CD4-positive, alpha-beta memory T cell (primary cell): ENCODE measurements at regions of chr12 and their contacts with region 1.

Region 1: DNA sequence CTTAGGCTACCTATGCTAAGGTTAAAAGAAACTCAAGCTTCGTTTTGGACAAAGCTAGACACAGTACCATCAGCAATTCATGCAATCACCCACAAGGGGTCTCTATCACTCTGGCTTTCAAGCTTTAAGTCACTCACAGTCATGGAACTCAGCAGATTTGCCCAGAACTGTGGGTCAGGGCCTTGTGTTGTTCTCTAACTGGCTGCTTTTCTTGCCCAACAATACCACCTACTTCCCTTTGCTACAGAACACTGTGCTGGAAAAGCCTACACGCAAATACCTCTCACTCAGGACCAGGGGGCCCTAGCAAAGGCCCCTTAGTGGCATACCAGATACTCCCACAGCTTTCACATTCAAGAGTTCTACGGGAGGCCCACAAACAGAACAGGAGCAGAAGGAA is 9.1 kb downstream of the NEMP1 start:
- DNase-seq: peak; percentile 73 to 77 (median 75)
- H3K4me3 ChIP-seq: no peak overlapping the region
- H3K4me3 Mint-ChIP-seq: peak overlapping the region in 3 of 8 donors; percentile 0 to 37 (median 28)
- H3K27ac ChIP-seq: peak overlapping the region; percentile 57
- H3K27ac Mint-ChIP-seq: peak overlapping the region; percentile 75 to 89 (median 85)
- H3K4me1 ChIP-seq: peaks cover 25% of the 10 kb centered on the region
- H3K4me1 Mint-ChIP-seq: peaks cover 11 to 34% (median 15%) of the 10 kb centered on the region in 4 donors
- H3K27me3 ChIP-seq: no peaks in the 10 kb centered on the region
- H3K27me3 Mint-ChIP-seq: no peaks in the 10 kb centered on the region

Region 2: GRCh38 chr12:57088459-57089248 is 19.1 kb after region 1 on chr12 and contains the start of gene NAB2:
- CTCF ChIA-PET with region 1: interaction called, 184 read pairs
- POLR2A ChIA-PET with region 1: interaction called, 108 read pairs
- intact Hi-C with region 1: loop called (anchors 1 kb)
- DNase-seq: peak; percentile 89 to 94 (median 92)
- H3K4me3 ChIP-seq: peak within 1 kb of the TSS; percentile 90 to 91
- H3K4me3 Mint-ChIP-seq: peak within 1 kb of the TSS; percentile 92 to 98 (median 95)
- H3K27ac ChIP-seq: peak within 1 kb of the TSS; percentile 97
- H3K27ac Mint-ChIP-seq: peak within 1 kb of the TSS; percentile 97 to 99 (median 98)
- H3K4me1 ChIP-seq: peaks cover 52% of the 10 kb centered on the region
- H3K4me1 Mint-ChIP-seq: peaks cover 40 to 78% (median 53%) of the 10 kb centered on the region in 4 donors
- H3K27me3 ChIP-seq: no peaks in the 10 kb centered on the region
- H3K27me3 Mint-ChIP-seq: no peaks in the 10 kb centered on the region
- total RNA-seq, gene NAB2: 17.5 to 19.5 TPM

Region 3: GRCh38 chr12:57118711-57119271 is 49.3 kb after region 1 on chr12:
- CTCF ChIA-PET with region 1: interaction called, 458 read pairs
- POLR2A ChIA-PET with region 1: interaction called, 4 read pairs
- intact Hi-C with region 1: no loop called
- DNase-seq: no peak
- H3K4me3 ChIP-seq: no peak overlapping the region
- H3K4me3 Mint-ChIP-seq: no peak overlapping the region
- H3K27ac ChIP-seq: no peak overlapping the region
- H3K27ac Mint-ChIP-seq: peak overlapping the region in 1 of 7 donors; percentile 79
- H3K4me1 ChIP-seq: no peaks in the 10 kb centered on the region
- H3K4me1 Mint-ChIP-seq: no peaks in the 10 kb centered on the region
- H3K27me3 ChIP-seq: no peaks in the 10 kb centered on the region
- H3K27me3 Mint-ChIP-seq: no peaks in the 10 kb centered on the region

Region 4: DNA sequence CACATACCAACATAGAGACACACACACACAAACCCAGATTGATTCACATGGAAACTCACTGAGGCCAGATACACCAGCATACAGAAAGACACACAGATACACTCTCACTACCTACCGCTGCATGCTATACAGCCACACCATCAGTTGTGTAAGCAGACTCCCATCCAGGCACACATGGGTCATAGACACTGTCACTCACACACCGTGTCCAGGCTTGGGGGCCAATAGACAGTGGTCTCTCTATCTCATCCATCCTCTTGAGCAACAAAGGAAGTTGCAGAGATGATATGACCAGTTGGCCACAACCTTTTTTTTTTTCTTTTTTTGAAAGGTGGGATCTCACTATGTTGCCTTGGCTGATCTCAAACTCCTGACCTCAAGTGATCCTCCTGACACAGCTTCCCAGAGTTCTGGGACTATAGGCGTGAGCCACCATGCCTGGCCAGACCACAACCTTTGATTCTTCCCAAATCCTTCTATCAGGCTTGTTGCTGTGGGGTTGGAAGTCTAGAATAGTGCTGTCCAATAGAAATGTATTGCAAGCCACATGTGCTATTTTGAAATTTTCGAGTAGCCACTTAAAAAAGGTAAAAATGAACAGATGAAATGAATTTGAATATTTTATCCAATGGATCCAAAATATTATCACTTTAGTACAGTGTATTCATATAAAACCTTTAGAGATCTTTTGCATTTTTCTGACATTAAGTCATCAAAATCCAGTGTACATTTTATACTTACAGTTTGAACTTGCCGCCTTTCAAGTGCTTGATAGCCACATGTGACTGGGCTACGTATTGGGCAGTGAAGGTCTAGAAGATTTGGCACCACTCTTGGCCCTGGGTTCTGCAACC is 70.5 kb after region 1 on chr12:
- CTCF ChIA-PET with region 1: no interaction called
- POLR2A ChIA-PET with region 1: no interaction called
- intact Hi-C with region 1: no loop called
- DNase-seq: no peak
- H3K4me3 ChIP-seq: no peak overlapping the region
- H3K4me3 Mint-ChIP-seq: no peak overlapping the region
- H3K27ac ChIP-seq: no peak overlapping the region
- H3K27ac Mint-ChIP-seq: no peak overlapping the region
- H3K4me1 ChIP-seq: no peaks in the 10 kb centered on the region
- H3K4me1 Mint-ChIP-seq: peaks cover 0 to 3% (median 0%) of the 10 kb centered on the region in 4 donors
- H3K27me3 ChIP-seq: no peaks in the 10 kb centered on the region
- H3K27me3 Mint-ChIP-seq: no peaks in the 10 kb centered on the region

Region 5: DNA sequence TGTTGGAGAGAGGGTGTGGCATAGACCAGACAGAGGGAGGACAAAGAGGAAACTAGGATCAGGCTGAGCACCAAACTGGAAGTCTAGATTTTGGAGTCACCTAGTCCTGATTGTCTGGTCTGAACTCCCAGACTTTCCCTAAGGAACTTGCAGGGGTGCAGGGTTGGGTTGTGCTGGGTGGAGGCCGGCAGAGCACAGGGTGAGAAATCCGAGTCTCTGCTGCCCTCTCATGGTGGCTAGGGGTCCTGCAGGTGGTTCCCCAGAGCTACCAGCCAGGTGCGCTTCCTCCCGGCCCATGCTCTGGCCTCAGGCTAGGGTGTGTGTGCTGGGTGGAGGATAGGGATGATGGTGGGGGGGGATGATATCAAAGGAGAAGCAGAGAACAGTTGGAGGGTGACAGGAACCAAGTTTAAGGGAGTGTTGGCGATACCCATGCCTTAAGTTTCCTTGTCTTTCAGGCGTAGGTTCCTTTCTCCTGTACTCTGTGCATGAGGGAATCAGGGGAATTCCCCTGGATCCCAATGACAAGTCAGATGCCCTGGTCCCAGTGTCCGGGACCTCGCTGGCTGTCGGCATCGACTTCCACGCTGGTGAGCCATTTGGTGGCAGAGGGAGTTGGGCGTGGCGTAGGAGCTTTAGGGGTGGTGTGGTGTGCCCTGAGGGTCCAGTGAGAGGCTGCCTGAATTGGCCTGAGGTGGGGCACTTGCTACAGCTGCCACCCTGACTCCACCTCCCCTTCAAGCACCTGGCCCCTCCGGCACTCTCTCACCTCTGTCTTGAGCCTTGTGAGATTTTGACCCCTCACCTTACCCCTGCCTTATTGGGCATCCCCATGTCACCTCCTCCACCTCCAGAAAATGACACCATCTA is 113.6 kb after region 1 on chr12:
- CTCF ChIA-PET with region 1: interaction called, 17 read pairs
- POLR2A ChIA-PET with region 1: interaction called, 4 read pairs
- intact Hi-C with region 1: loop called (anchors 1 kb)
- DNase-seq: peak; percentile 71 to 75 (median 73)
- H3K4me3 ChIP-seq: no peak overlapping the region
- H3K4me3 Mint-ChIP-seq: peak overlapping the region in 1 of 8 donors; percentile 25
- H3K27ac ChIP-seq: no peak overlapping the region
- H3K27ac Mint-ChIP-seq: peak overlapping the region in 1 of 7 donors; percentile 70
- H3K4me1 ChIP-seq: no peaks in the 10 kb centered on the region
- H3K4me1 Mint-ChIP-seq: peaks cover 2 to 7% (median 5%) of the 10 kb centered on the region in 4 donors
- H3K27me3 ChIP-seq: no peaks in the 10 kb centered on the region
- H3K27me3 Mint-ChIP-seq: peaks cover 0 to 2% of the 10 kb centered on the region in 2 donors